Heart right ventricle (tissue), 16 donors: ENCODE measurements at regions of chr4 and their contacts with region 1.

Region 1: DNA sequence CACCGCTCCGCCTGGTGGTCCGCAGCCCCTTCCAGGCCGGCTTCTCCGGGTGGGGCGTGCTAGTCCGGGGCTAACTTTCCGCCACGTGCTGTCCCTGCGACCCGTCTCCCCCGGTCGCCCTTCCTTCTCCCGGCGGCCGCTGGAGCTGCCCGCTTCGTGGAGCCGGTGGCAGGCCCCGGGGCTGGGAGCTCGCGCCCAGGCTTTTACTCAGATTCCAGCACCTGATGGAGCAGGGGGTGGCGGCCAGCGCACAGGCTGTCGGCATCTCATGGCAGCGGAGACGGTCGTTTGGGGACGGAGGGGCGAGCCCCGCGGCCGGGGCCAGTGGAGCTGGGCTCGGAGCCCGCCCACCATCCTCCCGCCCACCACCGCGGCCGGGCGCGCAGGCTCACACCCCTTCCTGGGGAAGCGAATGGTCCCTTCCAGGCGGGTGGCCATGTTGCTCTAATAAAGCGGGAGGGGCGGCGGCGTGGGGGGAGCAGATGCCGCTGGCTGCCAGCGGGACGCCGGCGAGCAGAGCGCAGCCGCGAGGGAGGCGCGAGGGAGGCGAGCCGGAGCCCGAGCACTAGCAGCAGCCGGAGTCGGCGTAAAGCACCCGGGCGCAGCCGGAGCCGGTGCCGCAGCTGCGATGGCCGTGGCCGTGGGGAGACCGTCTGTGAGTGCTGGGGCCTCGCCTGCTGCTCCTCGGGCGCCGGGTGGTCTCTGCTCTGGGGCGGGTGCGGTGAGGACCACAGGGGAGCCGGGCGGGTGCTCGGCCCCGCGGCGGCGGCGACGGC is at the start of gene SEPTIN11:
- DNase-seq: peak; percentile 93 to 95
- ATAC-seq: peak; percentile 92 to 97 (median 93)
- H3K4me3 ChIP-seq: peak within 1 kb of the TSS; percentile 76 to 94 (median 84)
- H3K27ac ChIP-seq: peak within 1 kb of the TSS; percentile 89 to 98 (median 92)
- H3K4me1 ChIP-seq: peaks cover 0 to 47% (median 29%) of the 10 kb centered on the region in 9 donors
- H3K27me3 ChIP-seq: no peaks in the 10 kb centered on the region
- CTCF ChIP-seq: peak in 1 of 9 donors; percentile 3
- total RNA-seq, gene SEPTIN11: 26.3 to 55.2 (median 30.6) TPM

Region 2: GRCh38 chr4:76504613-76505465 is 444.6 kb before region 1 on chr4:
- intact Hi-C with region 1: loop called in 1 of 10 experiments (anchors 5 kb)
- DNase-seq: no peak
- ATAC-seq: peak in 4 of 8 donors; percentile 33 to 63 (median 52)
- H3K4me3 ChIP-seq: no peak overlapping the region
- H3K27ac ChIP-seq: no peak overlapping the region
- H3K4me1 ChIP-seq: no peaks in the 10 kb centered on the region
- H3K27me3 ChIP-seq: peaks cover 0 to 5% (median 0%) of the 10 kb centered on the region in 7 donors
- CTCF ChIP-seq: peak; percentile 32 to 79 (median 71)

Region 3: DNA sequence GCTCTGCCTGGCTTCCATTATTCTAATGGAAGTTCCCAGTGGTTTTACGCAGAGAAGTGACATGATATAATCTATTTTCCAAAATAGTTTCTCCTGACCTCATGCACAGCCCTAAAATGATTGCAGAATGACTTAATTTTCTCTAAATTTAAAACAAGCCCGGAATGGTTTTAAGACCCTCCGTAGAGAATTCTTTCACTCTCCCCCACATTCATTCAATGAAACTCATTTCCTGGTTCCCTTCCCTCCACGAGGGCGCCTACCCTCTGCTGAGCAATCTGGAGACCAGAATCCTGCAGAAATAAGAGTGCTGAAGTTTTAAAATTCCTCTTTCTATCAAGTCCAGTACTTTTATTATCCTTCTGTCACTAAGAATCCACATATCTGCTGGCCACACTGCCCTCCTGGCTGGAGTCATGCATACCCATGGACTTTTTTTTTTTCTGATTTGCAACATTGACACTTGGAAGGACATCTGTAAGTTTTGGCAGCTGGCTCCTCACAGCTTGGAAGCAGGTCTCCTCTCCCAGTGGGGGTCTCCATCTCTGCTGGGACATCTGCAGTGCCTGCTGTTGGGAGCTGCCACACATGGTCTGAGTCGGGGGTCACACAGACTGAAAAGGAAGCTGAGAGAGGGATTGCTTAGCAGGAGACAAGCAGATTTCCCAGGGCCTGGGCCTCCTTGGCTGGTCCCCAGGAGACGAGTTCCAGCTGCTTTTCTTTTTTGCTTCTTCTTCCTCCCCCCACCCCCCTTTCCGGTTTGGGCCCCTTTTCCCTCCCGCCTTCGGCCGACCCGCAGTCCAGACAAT is 137.7 kb before region 1 on chr4:
- intact Hi-C with region 1: loop called in 2 of 10 experiments (anchors 5 kb)
- DNase-seq: peak; percentile 41 to 68
- ATAC-seq: peak; percentile 61 to 90 (median 82)
- H3K4me3 ChIP-seq: no peak overlapping the region
- H3K27ac ChIP-seq: peak overlapping the region in 9 of 10 donors; percentile 24 to 79 (median 64)
- H3K4me1 ChIP-seq: peaks cover 0 to 24% (median 14%) of the 10 kb centered on the region in 9 donors
- H3K27me3 ChIP-seq: no peaks in the 10 kb centered on the region
- CTCF ChIP-seq: no peak

Region 4: DNA sequence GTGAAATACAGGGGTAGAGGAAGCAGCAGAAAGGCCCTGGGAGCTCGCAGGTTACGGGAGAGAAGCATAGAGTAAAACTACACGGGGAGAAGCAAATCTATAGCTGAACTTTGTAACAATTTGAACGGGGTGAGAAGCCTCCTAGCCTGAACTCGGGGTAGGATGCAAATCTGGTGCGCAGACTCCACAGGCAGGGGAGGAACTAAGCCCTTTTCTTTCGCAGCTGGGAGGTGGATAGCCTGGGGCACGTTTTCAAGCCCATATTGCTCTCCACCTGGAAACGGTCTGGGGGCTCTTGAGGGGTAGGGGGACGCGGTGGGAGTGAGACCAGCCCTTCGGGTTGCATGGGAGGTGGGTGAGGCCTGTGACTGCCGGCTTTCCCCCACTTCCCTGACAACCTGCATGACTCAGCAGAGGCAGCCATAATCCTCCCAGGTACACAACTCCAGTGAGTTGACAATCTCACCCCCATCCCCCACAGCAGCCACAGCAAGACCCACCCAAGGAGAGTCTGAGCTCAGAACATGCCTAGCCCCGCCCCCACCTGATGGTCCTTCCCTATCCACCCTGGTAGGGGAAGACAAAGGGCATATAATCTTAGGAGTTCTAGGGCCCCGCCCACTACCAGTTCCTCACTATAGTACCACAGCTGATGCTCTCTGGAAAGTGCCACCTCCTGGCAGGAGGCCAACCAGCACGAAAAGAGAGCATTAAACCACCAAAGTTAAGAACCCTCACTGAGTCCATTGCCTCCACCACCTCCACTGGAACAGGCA is 81.4 kb before region 1 on chr4:
- intact Hi-C with region 1: no loop called
- DNase-seq: no peak
- ATAC-seq: no peak
- H3K4me3 ChIP-seq: no peak overlapping the region
- H3K27ac ChIP-seq: no peak overlapping the region
- H3K4me1 ChIP-seq: no peaks in the 10 kb centered on the region
- H3K27me3 ChIP-seq: peaks cover 0 to 11% (median 0%) of the 10 kb centered on the region in 7 donors
- CTCF ChIP-seq: no peak

Region 5: GRCh38 chr4:77007358-77008191 is 58.1 kb after region 1 on chr4:
- intact Hi-C with region 1: loop called in 2 of 10 experiments (anchors 10 kb)
- DNase-seq: no peak
- ATAC-seq: peak; percentile 57 to 84 (median 76)
- H3K4me3 ChIP-seq: no peak overlapping the region
- H3K27ac ChIP-seq: peak overlapping the region in 5 of 10 donors; percentile 23 to 63 (median 34)
- H3K4me1 ChIP-seq: peaks cover 10 to 75% (median 44%) of the 10 kb centered on the region in 9 donors
- H3K27me3 ChIP-seq: no peaks in the 10 kb centered on the region
- CTCF ChIP-seq: no peak

Region 6: DNA sequence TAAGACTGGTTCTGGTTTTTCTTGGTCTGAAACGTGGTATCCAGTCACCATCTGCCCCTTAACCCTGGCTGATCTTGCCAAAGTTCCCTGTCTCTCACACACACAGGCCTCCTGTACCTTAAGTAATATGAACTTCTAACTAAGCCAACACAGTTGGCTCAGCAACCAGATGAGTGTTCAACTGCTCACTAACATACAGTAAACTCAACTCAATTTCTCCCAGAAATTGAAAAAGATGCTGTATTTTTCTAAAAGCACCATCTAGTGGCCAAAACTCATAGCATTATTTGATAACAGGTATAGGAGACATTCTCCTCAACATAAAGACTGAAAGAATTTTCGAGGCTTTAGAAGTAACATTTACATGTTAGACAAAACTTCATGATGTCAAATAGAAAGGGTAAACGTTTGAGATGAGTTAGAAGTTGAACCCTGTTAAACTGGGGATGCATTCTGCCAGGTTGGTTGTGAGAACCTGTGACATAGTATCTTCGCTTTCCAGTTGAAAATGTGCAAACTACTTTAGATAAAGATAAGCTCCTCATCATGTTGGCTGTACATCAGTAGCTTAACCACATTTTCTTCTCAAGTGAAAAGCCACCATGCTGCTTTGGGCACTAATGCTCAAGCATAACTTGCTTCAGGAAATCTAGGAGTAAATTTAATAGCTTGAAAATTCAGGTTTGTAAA is 95.1 kb after region 1 on chr4:
- intact Hi-C with region 1: loop called in 3 of 10 experiments (anchors 10 kb)
- DNase-seq: no peak
- ATAC-seq: peak in 6 of 8 donors; percentile 11 to 50 (median 24)
- H3K4me3 ChIP-seq: no peak overlapping the region
- H3K27ac ChIP-seq: peak overlapping the region in 1 of 10 donors; percentile 3
- H3K4me1 ChIP-seq: peaks cover 0 to 24% (median 0%) of the 10 kb centered on the region in 9 donors
- H3K27me3 ChIP-seq: no peaks in the 10 kb centered on the region
- CTCF ChIP-seq: peak; percentile 33 to 67 (median 53)

Region 7: GRCh38 chr4:77203380-77204197 is 254.1 kb after region 1 on chr4:
- intact Hi-C with region 1: no loop called
- DNase-seq: peak in 1 of 2 donors; percentile 77
- ATAC-seq: peak in 7 of 8 donors; percentile 59 to 85 (median 76)
- H3K4me3 ChIP-seq: no peak overlapping the region
- H3K27ac ChIP-seq: no peak overlapping the region
- H3K4me1 ChIP-seq: peaks cover 0 to 6% (median 0%) of the 10 kb centered on the region in 9 donors
- H3K27me3 ChIP-seq: no peaks in the 10 kb centered on the region
- CTCF ChIP-seq: peak; percentile 48 to 84 (median 78)

Region 8: DNA sequence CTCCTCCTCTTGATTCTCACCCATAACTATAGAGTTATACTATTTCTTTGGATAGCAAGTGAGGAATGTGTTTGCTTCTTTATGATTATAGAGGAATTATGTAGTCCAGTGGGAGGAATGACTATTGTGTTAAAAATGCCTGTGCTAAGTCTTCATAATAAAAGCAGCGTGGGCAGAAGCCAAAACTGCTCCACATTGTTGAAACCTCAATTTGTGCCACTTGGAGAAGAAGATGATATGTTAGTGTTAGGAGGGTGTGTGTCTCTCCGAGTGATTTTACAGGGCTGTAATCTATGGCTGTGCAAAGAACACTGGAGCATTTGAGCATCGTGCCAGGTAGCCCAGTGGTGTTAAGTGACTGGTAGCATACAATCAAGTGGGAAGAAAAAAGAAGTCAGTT is 1181.9 kb after region 1 on chr4:
- intact Hi-C with region 1: no loop called
- DNase-seq: no peak
- ATAC-seq: no peak
- H3K4me3 ChIP-seq: no peak overlapping the region
- H3K27ac ChIP-seq: no peak overlapping the region
- H3K4me1 ChIP-seq: peaks cover 0 to 6% (median 0%) of the 10 kb centered on the region in 9 donors
- H3K27me3 ChIP-seq: no peaks in the 10 kb centered on the region
- CTCF ChIP-seq: no peak